ENCODE measurements at regions of chr18 and their contacts with region 1.

Region 1: GRCh38 chr18:24488824-24489493 is 28.5 kb downstream of the HRH4 start:
- H3K4me3 Mint-ChIP-seq: no peak overlapping the region
- H3K27ac Mint-ChIP-seq: no peak overlapping the region
- H3K4me1 Mint-ChIP-seq: peaks cover 22% of the 10 kb centered on the region
- H3K27me3 Mint-ChIP-seq: no peaks in the 10 kb centered on the region

Region 2: GRCh38 chr18:24176727-24177416 is 312.1 kb before region 1 on chr18:
- intact Hi-C with region 1: loop called (anchors 2 kb)
- H3K4me3 Mint-ChIP-seq: no peak overlapping the region
- H3K27ac Mint-ChIP-seq: peak overlapping the region; percentile 61
- H3K4me1 Mint-ChIP-seq: no peaks in the 10 kb centered on the region
- H3K27me3 Mint-ChIP-seq: no peaks in the 10 kb centered on the region

Region 3: DNA sequence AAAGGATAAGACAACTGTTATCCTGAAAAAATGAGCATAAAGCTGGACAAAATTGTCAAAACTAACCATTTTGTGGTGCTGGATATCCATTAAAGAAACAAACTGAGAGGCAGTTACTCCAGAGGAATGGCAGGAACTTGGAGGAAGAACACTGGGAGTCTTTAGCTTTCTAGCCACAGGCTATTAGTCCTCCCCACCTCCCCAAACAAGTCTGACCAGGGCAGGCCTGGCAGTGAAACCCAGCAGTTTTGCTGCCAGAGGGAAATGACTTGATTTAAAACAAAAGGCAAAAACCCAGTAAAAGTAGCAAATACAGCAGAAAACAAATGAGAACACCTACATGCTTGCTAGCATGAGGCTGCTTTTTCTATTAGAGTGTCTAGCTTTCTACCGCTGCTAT is 126.2 kb before region 1 on chr18:
- intact Hi-C with region 1: loop called (anchors 1 kb)
- H3K4me3 Mint-ChIP-seq: no peak overlapping the region
- H3K27ac Mint-ChIP-seq: no peak overlapping the region
- H3K4me1 Mint-ChIP-seq: peaks cover 7% of the 10 kb centered on the region
- H3K27me3 Mint-ChIP-seq: no peaks in the 10 kb centered on the region

Region 4: GRCh38 chr18:24426398-24427294 is 62.3 kb before region 1 on chr18 and contains the start of gene IMPACT:
- intact Hi-C with region 1: loop called (anchors 5 kb)
- H3K4me3 Mint-ChIP-seq: peak within 1 kb of the TSS; percentile 97
- H3K27ac Mint-ChIP-seq: peak within 1 kb of the TSS; percentile 95
- H3K4me1 Mint-ChIP-seq: peaks cover 30% of the 10 kb centered on the region
- H3K27me3 Mint-ChIP-seq: peaks cover 17% of the 10 kb centered on the region

Region 5: DNA sequence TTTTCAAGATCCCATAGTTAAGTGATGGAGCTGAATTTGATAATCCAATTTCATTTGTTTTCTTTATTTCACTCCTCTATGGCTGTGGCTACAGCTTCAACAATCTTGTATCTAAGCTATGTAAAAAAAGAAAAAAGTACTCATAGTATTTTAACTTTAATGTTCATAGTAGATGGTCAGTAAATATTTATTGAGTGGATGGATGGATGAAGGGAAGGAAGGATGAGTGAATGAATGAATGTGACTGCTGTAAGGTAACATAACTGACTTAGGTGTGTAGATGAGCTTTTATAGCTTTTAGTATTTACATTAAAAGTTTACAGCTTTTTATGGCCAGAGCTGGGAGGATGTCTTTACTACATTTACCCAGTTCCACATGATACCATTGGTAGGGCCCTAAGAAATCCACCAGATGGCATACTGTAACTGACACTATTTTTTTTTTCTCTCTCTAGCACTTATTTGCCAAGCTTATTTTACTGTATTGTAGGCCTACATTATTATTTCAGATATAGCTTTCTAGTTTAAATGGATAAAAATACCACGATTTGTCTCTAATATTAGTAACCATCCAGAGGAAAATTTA is 41.9 kb before region 1 on chr18:
- intact Hi-C with region 1: loop called (anchors 5 kb)
- H3K4me3 Mint-ChIP-seq: no peak overlapping the region
- H3K27ac Mint-ChIP-seq: no peak overlapping the region
- H3K4me1 Mint-ChIP-seq: peaks cover 15% of the 10 kb centered on the region
- H3K27me3 Mint-ChIP-seq: no peaks in the 10 kb centered on the region

Region 6: GRCh38 chr18:24514439-24514838 is 25.5 kb after region 1 on chr18:
- intact Hi-C with region 1: no loop called
- H3K4me3 Mint-ChIP-seq: no peak overlapping the region
- H3K27ac Mint-ChIP-seq: no peak overlapping the region
- H3K4me1 Mint-ChIP-seq: peaks cover 18% of the 10 kb centered on the region
- H3K27me3 Mint-ChIP-seq: no peaks in the 10 kb centered on the region

Region 7: GRCh38 chr18:24726727-24727492 is 238.0 kb after region 1 on chr18:
- intact Hi-C with region 1: loop called (anchors 2 kb)
- H3K4me3 Mint-ChIP-seq: no peak overlapping the region
- H3K27ac Mint-ChIP-seq: no peak overlapping the region
- H3K4me1 Mint-ChIP-seq: no peaks in the 10 kb centered on the region
- H3K27me3 Mint-ChIP-seq: no peaks in the 10 kb centered on the region